Activated T-helper 2 cell treated with anti-CD3 and anti-CD28 coated beads, Interferon-gamma antibody, Interleukin-2, Interleukin-4, amounts not matched to agents 10 μg/mL and 5 μg/mL and 100 μg/mL, durations not matched to agents 14 hours and 24 hours and 36 hours (primary cell): ENCODE measurements at regions of chr15 and their contacts with region 1.

Region 1: GRCh38 chr15:95259513-95259912 is 1028.2 kb downstream of the MCTP2 start:
- DNase-seq: peak; percentile 41
- H3K4me3 Mint-ChIP-seq: no peak overlapping the region
- H3K27ac Mint-ChIP-seq: no peak overlapping the region
- H3K4me1 Mint-ChIP-seq: peaks cover 6% of the 10 kb centered on the region
- H3K27me3 Mint-ChIP-seq: peaks cover 55% of the 10 kb centered on the region

Region 2: DNA sequence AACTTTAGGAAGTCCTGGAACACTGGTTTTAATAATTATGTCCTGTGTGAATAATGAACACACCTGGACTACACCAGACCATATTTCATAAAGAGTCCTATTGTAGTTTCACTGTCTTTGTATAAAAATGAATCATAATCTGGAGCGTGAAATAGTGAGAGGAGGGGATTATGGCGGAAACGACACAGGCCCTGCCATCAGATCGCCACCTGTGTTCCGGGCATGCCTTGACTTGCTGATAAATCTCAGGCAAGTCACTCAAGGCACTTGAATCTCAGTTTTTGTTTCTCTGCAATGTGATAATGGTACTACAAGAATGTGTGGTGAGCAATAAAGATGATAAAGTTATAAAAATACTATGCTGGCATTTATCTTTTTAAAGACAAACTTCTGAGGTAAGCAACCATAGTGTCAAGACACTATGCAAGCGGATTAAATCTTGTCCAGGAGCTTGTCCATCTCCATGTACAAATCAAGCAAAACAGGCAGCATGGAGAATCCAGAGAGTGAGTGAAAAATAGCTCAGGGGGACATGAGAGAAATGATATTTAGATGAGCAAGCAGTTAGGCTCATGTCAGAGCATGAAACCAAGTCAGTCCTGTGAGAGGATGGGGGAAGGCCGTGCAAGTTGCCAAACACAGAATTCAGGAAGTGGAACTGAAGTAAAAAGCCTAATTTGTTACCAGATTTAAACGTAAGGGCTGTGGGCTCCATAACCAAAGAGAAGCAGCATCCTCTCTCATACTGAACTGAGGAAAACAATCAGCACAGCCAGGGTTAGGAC is 32.5 kb before region 1 on chr15:
- intact Hi-C with region 1: no loop called
- DNase-seq: no peak
- H3K4me3 Mint-ChIP-seq: no peak overlapping the region
- H3K27ac Mint-ChIP-seq: no peak overlapping the region
- H3K4me1 Mint-ChIP-seq: no peaks in the 10 kb centered on the region
- H3K27me3 Mint-ChIP-seq: no peaks in the 10 kb centered on the region

Region 3: DNA sequence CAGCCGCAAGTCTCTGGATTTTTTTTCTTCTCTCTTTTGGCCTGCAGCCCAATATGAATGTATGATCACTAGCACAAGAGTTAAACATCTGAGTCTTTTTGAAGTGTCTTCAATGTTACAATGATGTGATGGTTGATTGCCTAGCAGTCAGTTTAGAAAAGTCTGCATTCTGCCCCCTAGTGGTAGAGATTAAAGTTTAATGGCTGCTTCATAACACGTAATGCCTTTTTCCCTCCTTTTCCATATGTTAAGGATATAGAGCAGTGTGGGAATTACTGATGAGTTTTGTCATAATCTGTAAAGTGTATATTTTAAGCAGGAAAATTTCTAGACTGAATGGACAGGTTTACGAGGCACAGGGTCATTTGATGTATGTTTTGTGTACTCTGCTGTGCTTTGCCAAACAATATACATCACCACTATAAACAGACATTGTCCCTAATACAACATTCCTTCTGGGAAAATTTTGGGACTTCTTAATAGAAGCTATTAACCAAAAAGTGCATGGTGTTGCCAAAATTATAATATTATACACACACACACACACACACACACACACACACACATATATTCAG is 32.5 kb after region 1 on chr15:
- intact Hi-C with region 1: loop called (anchors 1 kb)
- DNase-seq: no peak
- H3K4me3 Mint-ChIP-seq: no peak overlapping the region
- H3K27ac Mint-ChIP-seq: no peak overlapping the region
- H3K4me1 Mint-ChIP-seq: peaks cover 20% of the 10 kb centered on the region
- H3K27me3 Mint-ChIP-seq: peaks cover 61% of the 10 kb centered on the region